ENCODE measurements at regions of chr12 and their contacts with region 1.

Region 1: GRCh38 chr12:51020448-51021182 is 5.6 kb downstream of the SLC11A2 start:
- DNase-seq: no peak
- H3K4me3 Mint-ChIP-seq: no peak overlapping the region
- H3K27ac Mint-ChIP-seq: no peak overlapping the region
- H3K4me1 Mint-ChIP-seq: peaks cover 57% of the 10 kb centered on the region
- H3K27me3 Mint-ChIP-seq: no peaks in the 10 kb centered on the region

Region 2: DNA sequence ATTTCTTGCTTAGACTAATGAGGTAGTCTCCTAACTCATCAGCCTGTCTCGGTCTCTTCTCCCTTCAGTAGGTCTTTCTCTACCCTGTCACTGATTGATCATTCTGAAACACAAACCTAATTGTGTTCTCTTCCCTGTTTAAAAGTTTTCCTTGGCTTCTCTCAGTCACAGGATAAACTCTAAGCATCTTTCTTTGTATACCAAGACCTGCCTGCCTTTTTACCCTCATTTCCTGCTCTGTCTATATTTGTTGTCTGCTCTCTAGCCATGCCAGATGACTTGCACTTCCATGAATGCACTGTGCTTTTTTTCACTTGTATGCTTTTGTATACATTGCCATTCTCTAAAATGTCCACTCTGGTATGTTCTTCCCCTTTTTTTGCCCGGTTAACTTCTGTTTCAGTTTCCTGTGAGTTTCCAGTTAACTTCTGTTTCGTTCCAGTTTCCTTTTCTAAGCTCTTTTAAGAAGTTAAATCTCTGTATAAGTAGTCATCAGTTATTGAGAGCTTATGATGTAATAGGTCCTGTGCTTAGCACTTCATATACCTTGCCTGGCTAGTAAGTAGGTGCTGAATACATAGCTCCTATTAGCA is 503.1 kb before region 1 on chr12:
- intact Hi-C with region 1: loop called (anchors 5 kb)
- DNase-seq: no peak
- H3K4me3 Mint-ChIP-seq: no peak overlapping the region
- H3K27ac Mint-ChIP-seq: no peak overlapping the region
- H3K4me1 Mint-ChIP-seq: peaks cover 31% of the 10 kb centered on the region
- H3K27me3 Mint-ChIP-seq: no peaks in the 10 kb centered on the region